Activated CD4-positive, alpha-beta T cell treated with anti-CD3 and anti-CD28 coated beads for 36 hours (primary cell): ENCODE measurements at regions of chr9 and their contacts with region 1.

Region 1: DNA sequence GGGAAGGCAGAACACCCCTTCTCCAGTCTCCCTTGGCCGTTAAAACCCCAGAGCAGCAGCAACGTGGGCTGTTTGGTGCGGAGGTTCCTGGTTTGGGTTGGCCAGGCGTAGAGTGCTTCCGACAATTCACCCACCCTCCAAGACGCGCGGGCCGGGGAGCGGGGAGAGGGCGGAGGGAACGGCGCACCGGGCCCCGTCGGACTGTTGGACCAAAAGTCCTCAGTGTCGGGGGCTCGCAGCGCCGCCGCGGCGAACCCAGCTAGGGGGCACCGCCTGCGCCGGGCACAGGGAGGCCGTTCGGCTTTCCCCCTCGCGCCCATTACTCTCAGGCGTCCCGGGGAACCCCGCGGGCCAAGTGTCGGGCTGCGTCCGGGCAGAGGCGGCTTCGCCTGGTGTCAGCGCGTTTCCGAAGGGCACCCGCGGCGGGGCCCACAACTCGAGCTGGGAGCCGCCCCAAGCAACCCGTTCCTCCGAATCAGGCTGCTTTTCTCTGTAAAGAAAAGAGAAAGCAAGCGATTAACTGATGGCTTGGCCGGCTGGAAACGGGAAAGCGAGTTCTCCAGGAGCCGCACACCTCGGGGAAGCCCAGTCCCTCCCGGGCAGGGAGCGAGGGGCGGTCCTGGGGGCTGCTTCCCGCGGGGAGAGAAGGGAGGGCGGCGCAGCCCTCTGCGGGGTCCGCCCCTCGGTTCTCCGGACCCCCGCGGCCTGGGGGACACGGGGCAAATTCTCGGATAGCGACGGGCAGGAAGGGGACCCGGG is 145.5 kb downstream of the ERCC6L2 start:
- DNase-seq: peak; percentile 71
- ATAC-seq: peak; percentile 38
- H3K4me3 Mint-ChIP-seq: peak overlapping the region; percentile 68
- H3K27ac Mint-ChIP-seq: peak overlapping the region; percentile 63
- H3K4me1 Mint-ChIP-seq: peaks cover 57% of the 10 kb centered on the region
- H3K27me3 Mint-ChIP-seq: peaks cover 43% of the 10 kb centered on the region

Region 2: DNA sequence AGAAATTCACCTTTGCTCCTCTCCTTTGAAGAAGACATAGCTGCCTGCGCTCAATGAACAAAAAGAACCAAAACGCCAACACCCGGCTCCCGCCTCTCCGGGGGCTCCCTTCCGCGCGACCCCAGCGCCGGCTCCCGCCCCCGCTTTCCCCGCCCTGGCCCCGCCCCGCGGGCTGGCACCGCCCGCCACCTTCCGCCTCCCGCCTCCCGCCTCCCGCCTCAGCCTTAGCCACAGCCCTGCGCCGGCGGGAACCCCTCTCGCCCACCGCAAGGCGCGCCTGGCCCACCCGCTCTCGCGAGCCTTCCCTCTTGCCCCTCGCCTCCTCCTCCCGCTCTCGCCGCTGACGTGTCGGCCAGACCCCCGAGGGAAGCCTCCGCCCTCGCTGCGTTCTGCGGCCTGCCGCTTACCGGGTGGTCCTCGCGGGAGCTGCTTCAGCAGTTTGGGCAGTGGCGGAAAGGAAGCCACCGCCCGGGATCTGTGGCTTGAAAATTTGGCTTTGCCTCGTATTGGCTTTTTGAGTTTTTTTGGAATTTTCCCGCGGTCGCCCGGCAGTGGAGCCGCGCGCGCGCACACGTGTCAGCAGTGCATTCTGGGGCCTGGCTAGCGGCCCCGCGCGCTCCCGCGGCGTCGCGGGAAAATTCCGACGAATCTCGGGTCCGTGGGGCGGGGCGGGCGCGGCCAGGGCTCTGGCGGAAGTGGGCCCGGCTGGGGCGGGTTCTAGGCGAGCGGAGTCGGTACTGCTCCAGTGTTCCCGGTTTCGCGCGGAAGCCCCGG is 703.7 kb before region 1 on chr9 and contains the start of gene FANCC:
- CTCF ChIA-PET with region 1: no interaction called
- POLR2A ChIA-PET with region 1: no interaction called
- intact Hi-C with region 1: loop called in 1 of 2 experiments (anchors 5 kb)
- DNase-seq: peak; percentile 90
- ATAC-seq: peak; percentile 84
- H3K4me3 Mint-ChIP-seq: peak within 1 kb of the TSS; percentile 85
- H3K27ac Mint-ChIP-seq: peak within 1 kb of the TSS; percentile 95
- H3K4me1 Mint-ChIP-seq: peaks cover 15% of the 10 kb centered on the region
- H3K27me3 Mint-ChIP-seq: peaks cover 7% of the 10 kb centered on the region
- total RNA-seq, gene FANCC: 15.9 to 16.7 TPM

Region 3: GRCh38 chr9:95588724-95589652 is 432.0 kb before region 1 on chr9:
- CTCF ChIA-PET with region 1: no interaction called
- POLR2A ChIA-PET with region 1: no interaction called
- intact Hi-C with region 1: no loop called
- DNase-seq: no peak
- ATAC-seq: no peak
- H3K4me3 Mint-ChIP-seq: no peak overlapping the region
- H3K27ac Mint-ChIP-seq: no peak overlapping the region
- H3K4me1 Mint-ChIP-seq: no peaks in the 10 kb centered on the region
- H3K27me3 Mint-ChIP-seq: peaks cover 4% of the 10 kb centered on the region

Region 4: DNA sequence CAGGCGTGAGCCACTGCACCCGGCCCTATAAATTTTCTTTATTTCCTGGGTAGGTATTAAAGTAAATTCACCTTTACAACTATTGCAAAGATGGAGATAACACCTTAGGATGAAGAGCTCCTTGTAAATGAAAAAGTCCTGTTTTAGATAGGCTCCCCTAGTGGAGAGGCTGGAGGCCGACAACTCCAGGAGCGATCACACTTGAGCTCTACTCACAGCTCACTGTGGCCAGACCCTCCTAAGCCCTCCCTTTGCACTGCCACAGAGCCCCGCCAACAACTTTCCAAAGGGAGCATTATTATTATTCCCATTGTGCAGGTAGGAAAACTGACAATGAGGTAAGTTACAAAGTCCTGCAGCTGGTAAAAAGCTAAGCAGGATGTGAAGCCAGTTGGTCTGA is 284.6 kb before region 1 on chr9:
- CTCF ChIA-PET with region 1: no interaction called
- POLR2A ChIA-PET with region 1: no interaction called
- intact Hi-C with region 1: no loop called
- DNase-seq: peak; percentile 24
- ATAC-seq: no peak
- H3K4me3 Mint-ChIP-seq: no peak overlapping the region
- H3K27ac Mint-ChIP-seq: no peak overlapping the region
- H3K4me1 Mint-ChIP-seq: peaks cover 9% of the 10 kb centered on the region
- H3K27me3 Mint-ChIP-seq: peaks cover 12% of the 10 kb centered on the region

Region 5: DNA sequence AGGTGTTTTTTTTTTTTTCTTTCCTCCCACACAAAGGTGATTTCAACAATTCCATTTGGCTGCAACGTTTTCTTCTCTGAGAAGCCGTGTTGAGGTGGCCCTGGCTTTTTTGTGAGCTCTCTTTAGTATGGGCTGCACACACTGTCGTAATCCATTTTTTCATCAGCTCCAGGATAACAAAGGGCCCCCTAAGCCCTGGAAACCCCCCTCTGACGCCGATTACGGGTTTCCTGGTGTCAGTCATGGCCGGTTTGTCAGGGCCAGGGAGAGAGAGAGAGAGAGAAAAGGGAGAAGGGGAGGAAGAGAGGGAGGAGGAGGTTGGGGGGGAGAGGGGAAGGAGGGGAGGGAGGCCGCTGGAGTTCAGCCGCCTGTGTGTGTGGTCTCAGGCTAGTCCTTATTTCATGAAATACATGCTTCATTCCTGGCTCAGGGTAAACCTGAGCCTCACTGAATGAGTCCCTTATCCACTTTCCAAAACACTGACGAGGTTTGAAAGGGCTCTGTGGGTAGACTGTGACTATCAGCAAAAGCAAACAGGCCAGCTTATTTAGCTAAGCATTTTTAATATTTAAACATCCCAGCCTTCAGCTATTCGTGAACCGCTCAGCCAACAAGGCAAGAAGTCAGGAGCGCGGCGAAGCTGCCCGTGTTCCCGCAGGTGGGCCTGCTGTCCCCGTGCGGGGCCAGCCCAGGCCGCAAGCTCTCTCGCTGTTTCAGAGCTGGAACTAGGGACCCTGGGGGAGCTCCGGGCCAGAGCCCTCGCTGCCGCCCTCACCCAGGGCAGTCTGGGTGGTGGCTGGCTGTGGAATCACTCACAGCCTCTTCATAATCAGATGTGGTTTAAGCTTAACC is 27.4 kb after region 1 on chr9:
- CTCF ChIA-PET with region 1: no interaction called
- POLR2A ChIA-PET with region 1: no interaction called
- intact Hi-C with region 1: loop called in 1 of 2 experiments (anchors 1 kb)
- DNase-seq: peak; percentile 39
- ATAC-seq: peak; percentile 72
- H3K4me3 Mint-ChIP-seq: no peak overlapping the region
- H3K27ac Mint-ChIP-seq: peak overlapping the region; percentile 47
- H3K4me1 Mint-ChIP-seq: peaks cover 9% of the 10 kb centered on the region
- H3K27me3 Mint-ChIP-seq: no peaks in the 10 kb centered on the region

Region 6: GRCh38 chr9:96080364-96080763 is 59.4 kb after region 1 on chr9:
- CTCF ChIA-PET with region 1: no interaction called
- POLR2A ChIA-PET with region 1: no interaction called
- intact Hi-C with region 1: loop called in 1 of 2 experiments (anchors 10 kb)
- DNase-seq: no peak
- ATAC-seq: no peak
- H3K4me3 Mint-ChIP-seq: no peak overlapping the region
- H3K27ac Mint-ChIP-seq: no peak overlapping the region
- H3K4me1 Mint-ChIP-seq: no peaks in the 10 kb centered on the region
- H3K27me3 Mint-ChIP-seq: peaks cover 2% of the 10 kb centered on the region

Region 7: DNA sequence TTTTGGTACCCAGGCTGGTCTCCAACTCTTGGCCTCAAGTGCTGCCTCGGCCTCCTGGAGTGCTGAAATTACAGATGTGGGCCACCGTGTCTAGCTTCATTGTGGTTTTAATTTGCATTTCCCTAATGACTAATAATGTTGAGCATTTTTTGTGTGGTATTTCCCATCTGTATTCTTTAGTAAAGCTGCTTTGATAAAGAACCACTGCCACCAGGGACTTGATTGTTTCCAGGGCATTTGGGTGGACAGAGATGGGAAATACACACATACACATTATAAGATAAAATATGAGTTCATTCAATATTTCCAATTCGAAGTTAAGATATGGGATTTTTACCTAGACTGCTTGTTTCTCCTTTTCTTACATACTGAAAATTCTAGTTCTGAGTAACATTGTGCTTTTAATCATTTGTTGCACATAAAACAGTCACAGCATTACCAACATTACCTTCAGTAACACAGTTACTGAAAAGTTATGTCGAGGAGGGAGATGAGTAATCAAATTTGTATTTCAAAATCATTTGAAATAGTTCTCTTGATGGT is 457.9 kb after region 1 on chr9:
- CTCF ChIA-PET with region 1: no interaction called
- POLR2A ChIA-PET with region 1: no interaction called
- intact Hi-C with region 1: loop called in 1 of 2 experiments (anchors 5 kb)
- DNase-seq: peak; percentile 59
- ATAC-seq: peak; percentile 83
- H3K4me3 Mint-ChIP-seq: no peak overlapping the region
- H3K27ac Mint-ChIP-seq: peak overlapping the region; percentile 72
- H3K4me1 Mint-ChIP-seq: peaks cover 28% of the 10 kb centered on the region
- H3K27me3 Mint-ChIP-seq: no peaks in the 10 kb centered on the region